ENCODE measurements at regions of chr5 and their contacts with region 1.

Region 1: GRCh38 chr5:34929150-34929719 is at the start of gene DNAJC21:
- DNase-seq: peak; percentile 93 to 99 (median 97)
- ATAC-seq: peak; percentile 93
- H3K4me3 ChIP-seq: peak within 1 kb of the TSS; percentile 75
- H3K4me3 Mint-ChIP-seq: peak within 1 kb of the TSS; percentile 94 to 99 (median 96)
- H3K27ac ChIP-seq: peak within 1 kb of the TSS; percentile 93
- H3K27ac Mint-ChIP-seq: peak within 1 kb of the TSS; percentile 86 to 98 (median 94)
- H3K4me1 ChIP-seq: peaks cover 15 to 18% of the 10 kb centered on the region in 2 donors
- H3K4me1 Mint-ChIP-seq: peaks cover 19 to 44% (median 36%) of the 10 kb centered on the region in 7 donors
- H3K27me3 ChIP-seq: no peaks in the 10 kb centered on the region
- H3K27me3 Mint-ChIP-seq: no peaks in the 10 kb centered on the region
- total RNA-seq, gene DNAJC21: 43.9 to 66.4 (median 49.6) TPM

Region 2: GRCh38 chr5:34626036-34626754 is 303.0 kb before region 1 on chr5:
- CTCF ChIA-PET with region 1: no interaction called
- POLR2A ChIA-PET with region 1: no interaction called
- intact Hi-C with region 1: no loop called
- DNase-seq: no peak
- ATAC-seq: no peak
- H3K4me3 ChIP-seq: no peak overlapping the region
- H3K4me3 Mint-ChIP-seq: no peak overlapping the region
- H3K27ac ChIP-seq: no peak overlapping the region
- H3K27ac Mint-ChIP-seq: no peak overlapping the region
- H3K4me1 ChIP-seq: no peaks in the 10 kb centered on the region
- H3K4me1 Mint-ChIP-seq: no peaks in the 10 kb centered on the region
- H3K27me3 ChIP-seq: no peaks in the 10 kb centered on the region
- H3K27me3 Mint-ChIP-seq: peaks cover 0 to 17% (median 10%) of the 10 kb centered on the region in 5 donors

Region 3: DNA sequence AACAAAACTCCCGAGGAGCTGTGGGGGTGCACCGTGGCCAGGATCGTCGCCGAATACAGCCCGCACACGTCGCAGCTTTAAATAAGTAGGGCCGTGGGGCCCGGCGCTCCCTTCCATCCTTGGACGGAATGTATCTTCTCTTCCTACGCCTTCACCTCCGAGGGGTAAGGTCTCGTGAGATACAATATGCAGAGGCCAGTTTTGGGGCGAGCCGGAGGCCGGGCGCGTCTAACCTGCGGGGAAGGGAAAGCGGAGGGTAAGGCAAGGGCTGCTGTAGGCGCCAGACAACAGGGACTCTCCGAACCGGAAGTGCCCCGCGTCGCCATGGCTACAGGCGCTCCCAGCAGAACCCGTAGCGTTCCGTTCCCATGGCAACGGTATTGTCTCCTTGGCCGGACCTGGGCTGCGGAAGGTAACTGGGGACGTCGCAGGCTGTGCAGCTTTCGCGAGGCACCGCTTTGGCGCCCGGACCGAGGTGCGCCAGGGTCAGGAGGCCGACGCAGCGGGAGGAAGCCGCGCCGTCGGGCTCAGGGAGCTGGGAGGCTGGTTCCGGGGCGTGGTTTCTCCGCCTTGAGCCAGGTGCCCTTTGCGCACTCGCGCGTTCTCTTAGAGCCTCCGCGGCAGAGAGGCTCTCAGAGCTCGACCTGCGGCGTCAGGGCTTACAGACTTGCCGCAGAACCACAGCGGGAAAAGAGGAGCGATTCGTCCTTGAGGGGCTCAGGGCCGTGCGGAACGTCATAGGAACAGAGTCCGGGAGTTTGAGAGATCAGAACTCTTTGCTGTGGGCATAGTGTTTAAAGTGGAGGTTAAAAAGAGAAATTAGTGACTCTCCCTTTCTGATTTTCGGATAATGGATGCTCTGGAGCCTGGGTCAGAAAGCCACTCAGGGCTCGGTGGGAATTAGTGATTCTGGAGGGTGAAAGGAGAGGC is 90.2 kb before region 1 on chr5 and contains the start of gene TTC23L:
- CTCF ChIA-PET with region 1: no interaction called
- POLR2A ChIA-PET with region 1: interaction called, 3 read pairs
- intact Hi-C with region 1: loop called (anchors 1 kb)
- DNase-seq: peak; percentile 82 to 95 (median 90)
- ATAC-seq: peak; percentile 94
- H3K4me3 ChIP-seq: peak within 1 kb of the TSS; percentile 85
- H3K4me3 Mint-ChIP-seq: peak within 1 kb of the TSS; percentile 79 to 97 (median 92)
- H3K27ac ChIP-seq: peak within 1 kb of the TSS; percentile 78
- H3K27ac Mint-ChIP-seq: peak within 1 kb of the TSS; percentile 83 to 99 (median 94)
- H3K4me1 ChIP-seq: peaks cover 0 to 4% of the 10 kb centered on the region in 2 donors
- H3K4me1 Mint-ChIP-seq: peaks cover 6 to 16% (median 10%) of the 10 kb centered on the region in 7 donors
- H3K27me3 ChIP-seq: no peaks in the 10 kb centered on the region
- H3K27me3 Mint-ChIP-seq: peaks cover 0 to 9% (median 0%) of the 10 kb centered on the region in 5 donors
- total RNA-seq, gene TTC23L: 0.57 to 1.9 (median 1.00) TPM in 3 of 5 experiments, not detected in the others

Region 4: DNA sequence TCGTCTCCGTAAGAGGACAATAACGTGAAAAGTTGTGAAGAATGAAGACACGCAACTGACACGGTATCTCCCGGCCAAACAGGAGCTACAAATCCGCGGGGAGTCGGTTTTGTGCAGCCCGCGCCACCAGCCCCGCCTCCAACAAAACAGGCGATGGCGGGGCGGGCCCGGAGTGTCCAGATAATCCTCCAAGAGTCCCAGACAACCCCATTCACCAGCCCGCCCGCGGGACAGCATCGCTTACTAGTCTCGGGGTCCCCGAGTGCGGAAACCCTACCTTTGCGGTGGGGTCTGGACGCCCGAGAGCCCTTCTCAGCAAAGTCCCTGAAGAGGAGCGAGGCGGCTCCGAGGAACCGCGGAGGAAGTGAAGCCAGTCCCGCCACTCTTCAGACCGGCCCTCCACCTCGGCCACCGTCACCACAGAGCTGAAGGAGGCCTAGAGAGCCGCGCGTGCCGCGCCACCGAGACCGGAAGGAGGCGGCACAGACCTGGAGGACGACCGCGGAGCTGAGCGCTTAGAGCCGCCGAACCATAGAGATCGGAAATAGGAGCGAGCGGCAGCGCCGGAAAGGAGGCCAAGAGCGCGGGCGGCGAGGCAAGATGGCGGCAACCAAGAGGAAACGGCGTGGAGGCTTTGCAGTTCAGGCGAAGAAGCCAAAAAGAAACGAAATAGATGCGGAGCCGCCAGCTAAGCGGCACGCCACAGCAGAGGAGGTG is 13.9 kb before region 1 on chr5 and contains the starts of genes BRIX1 and RAD1:
- CTCF ChIA-PET with region 1: interaction called, 19 read pairs
- POLR2A ChIA-PET with region 1: interaction called, 91 read pairs
- intact Hi-C with region 1: loop called (anchors 1 kb)
- DNase-seq: peak; percentile 86 to 95 (median 92)
- ATAC-seq: peak; percentile 99
- H3K4me3 ChIP-seq: peak within 1 kb of the TSS; percentile 99
- H3K4me3 Mint-ChIP-seq: peak within 1 kb of the TSS in 3 of 10 donors; percentile 56 to 80 (median 60)
- H3K27ac ChIP-seq: peak within 1 kb of the TSS; percentile 84
- H3K27ac Mint-ChIP-seq: peak within 1 kb of the TSS in 2 of 9 donors; percentile 59 to 69
- H3K4me1 ChIP-seq: peaks cover 19 to 34% of the 10 kb centered on the region in 2 donors
- H3K4me1 Mint-ChIP-seq: peaks cover 17 to 41% (median 35%) of the 10 kb centered on the region in 7 donors
- H3K27me3 ChIP-seq: no peaks in the 10 kb centered on the region
- H3K27me3 Mint-ChIP-seq: no peaks in the 10 kb centered on the region
- total RNA-seq, gene BRIX1: 13.4 to 45.2 (median 26.8) TPM
- total RNA-seq, gene RAD1: 19.3 to 29.6 (median 24.6) TPM

Region 5: GRCh38 chr5:35617435-35618303 is 688.4 kb after region 1 on chr5 and contains the start of gene SPEF2:
- CTCF ChIA-PET with region 1: interaction called, 3 read pairs
- POLR2A ChIA-PET with region 1: no interaction called
- intact Hi-C with region 1: loop called (anchors 5 kb)
- DNase-seq: peak; percentile 57 to 76 (median 71)
- ATAC-seq: peak; percentile 95
- H3K4me3 ChIP-seq: peak within 1 kb of the TSS; percentile 95
- H3K4me3 Mint-ChIP-seq: peak within 1 kb of the TSS; percentile 91 to 96 (median 94)
- H3K27ac ChIP-seq: peak within 1 kb of the TSS; percentile 27
- H3K27ac Mint-ChIP-seq: peak within 1 kb of the TSS; percentile 79 to 96 (median 89)
- H3K4me1 ChIP-seq: peaks cover 4 to 12% of the 10 kb centered on the region in 2 donors
- H3K4me1 Mint-ChIP-seq: peaks cover 14 to 34% (median 26%) of the 10 kb centered on the region in 7 donors
- H3K27me3 ChIP-seq: no peaks in the 10 kb centered on the region
- H3K27me3 Mint-ChIP-seq: no peaks in the 10 kb centered on the region
- total RNA-seq, gene SPEF2: 7.1 to 13.5 (median 9.9) TPM

Region 6: DNA sequence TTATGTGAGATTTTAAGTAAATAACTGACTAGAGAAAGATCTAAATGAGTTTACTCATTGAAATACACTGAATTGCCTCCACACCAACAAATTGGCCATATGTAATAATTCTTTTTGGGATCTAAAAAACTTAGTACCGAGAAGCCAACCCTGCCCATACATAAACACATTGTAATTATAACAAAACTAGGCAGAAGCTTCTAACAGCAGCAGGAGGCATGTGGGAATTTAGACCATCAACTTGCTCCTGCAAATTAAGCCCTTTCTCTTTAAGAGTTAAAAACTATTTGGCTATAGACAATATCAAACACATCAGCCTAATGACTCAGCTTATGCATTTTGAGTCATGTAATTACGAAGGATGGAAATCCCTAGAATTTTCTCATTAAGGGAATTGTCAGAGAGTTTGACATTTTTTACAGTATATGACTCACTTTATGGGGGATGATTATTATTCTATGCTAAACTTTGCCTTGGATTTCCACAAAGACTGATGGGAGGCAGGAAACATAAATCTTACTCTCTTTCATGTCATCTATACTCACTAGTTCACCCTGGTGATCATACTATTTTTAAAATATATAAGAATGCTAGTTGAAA is 928.5 kb after region 1 on chr5:
- CTCF ChIA-PET with region 1: no interaction called
- POLR2A ChIA-PET with region 1: interaction called, 5 read pairs
- intact Hi-C with region 1: loop called (anchors 2 kb)
- DNase-seq: peak in 1 of 9 donors; percentile 41
- ATAC-seq: no peak
- H3K4me3 ChIP-seq: peak overlapping the region; percentile 80
- H3K4me3 Mint-ChIP-seq: peak overlapping the region; percentile 82 to 100 (median 94)
- H3K27ac ChIP-seq: peak overlapping the region; percentile 98
- H3K27ac Mint-ChIP-seq: peak overlapping the region; percentile 96 to 100 (median 99)
- H3K4me1 ChIP-seq: peaks cover 40 to 50% of the 10 kb centered on the region in 2 donors
- H3K4me1 Mint-ChIP-seq: peaks cover 25 to 73% (median 63%) of the 10 kb centered on the region in 7 donors
- H3K27me3 ChIP-seq: no peaks in the 10 kb centered on the region
- H3K27me3 Mint-ChIP-seq: no peaks in the 10 kb centered on the region